Panc1 (cell line): ENCODE measurements at regions of chr7 and their contacts with region 1.

Region 1: GRCh38 chr7:70165477-70166170 is 567.3 kb downstream of the AUTS2 start:
- DNase-seq: no peak
- ATAC-seq: no peak
- H3K4me3 ChIP-seq: no peak overlapping the region
- H3K27ac ChIP-seq: no peak overlapping the region
- H3K4me1 ChIP-seq: no peaks in the 10 kb centered on the region
- H3K27me3 ChIP-seq: no peaks in the 10 kb centered on the region; the same call in 1 of the 2 replicates
- CTCF ChIP-seq: no peak

Region 2: DNA sequence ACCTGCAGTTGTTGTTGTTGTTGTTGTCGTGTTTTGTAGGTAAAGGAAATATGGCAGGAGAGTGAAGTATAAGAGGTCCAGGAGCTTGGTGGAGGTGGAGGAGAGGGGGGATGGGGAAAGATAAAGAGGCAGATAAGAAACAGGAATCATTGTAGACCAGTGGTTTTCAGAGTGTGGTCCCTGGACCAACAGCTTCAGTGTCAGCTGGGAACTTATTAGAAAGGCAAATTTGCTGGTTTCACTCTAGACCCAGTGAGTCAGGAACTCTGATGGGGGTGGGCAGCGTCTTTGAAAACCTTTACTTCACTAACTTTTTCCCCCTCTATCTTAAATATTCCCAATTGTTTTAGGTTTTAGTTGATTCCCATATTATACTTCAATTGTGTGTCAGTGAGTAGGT is 325.8 kb before region 1 on chr7:
- CTCF ChIA-PET with region 1: no interaction called
- POLR2A ChIA-PET with region 1: no interaction called
- in situ Hi-C with region 1: no loop called
- intact Hi-C with region 1: no loop called
- DNase-seq: no peak
- ATAC-seq: no peak
- H3K4me3 ChIP-seq: no peak overlapping the region
- H3K27ac ChIP-seq: no peak overlapping the region
- H3K4me1 ChIP-seq: no peaks in the 10 kb centered on the region
- H3K27me3 ChIP-seq: no peaks in the 10 kb centered on the region; the same call in 1 of the 2 replicates
- CTCF ChIP-seq: no peak

Region 3: DNA sequence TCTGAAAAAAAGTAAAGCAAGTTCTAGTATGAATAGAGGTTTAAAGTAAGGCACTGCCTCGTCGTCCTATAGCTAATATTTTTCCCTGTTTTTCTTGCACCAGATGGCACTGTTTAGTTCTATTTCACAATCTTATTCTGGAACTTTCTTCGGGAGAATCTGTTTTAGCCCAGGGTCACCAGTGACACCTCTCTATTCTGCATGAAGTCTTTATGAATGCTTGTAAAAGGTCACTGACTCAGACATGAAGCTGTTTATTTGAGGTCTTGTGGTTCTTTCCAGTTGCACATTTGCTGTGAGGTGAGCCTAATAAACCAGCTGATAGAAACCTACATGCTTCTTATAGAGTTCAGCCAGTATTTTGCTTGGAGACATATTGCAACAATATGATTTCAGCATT is 123.1 kb before region 1 on chr7:
- CTCF ChIA-PET with region 1: interaction called, 10 read pairs
- POLR2A ChIA-PET with region 1: interaction called, 6 read pairs
- in situ Hi-C with region 1: no loop called
- intact Hi-C with region 1: no loop called
- DNase-seq: no peak
- ATAC-seq: no peak
- H3K4me3 ChIP-seq: no peak overlapping the region
- H3K27ac ChIP-seq: no peak overlapping the region
- H3K4me1 ChIP-seq: no peaks in the 10 kb centered on the region
- H3K27me3 ChIP-seq: no peaks in the 10 kb centered on the region
- CTCF ChIP-seq: peak; percentile 22; the same call in 1 of the 2 replicates

Region 4: GRCh38 chr7:70183278-70183677 is 17.7 kb after region 1 on chr7:
- CTCF ChIA-PET with region 1: no interaction called
- POLR2A ChIA-PET with region 1: no interaction called
- in situ Hi-C with region 1: no loop called
- intact Hi-C with region 1: no loop called
- DNase-seq: no peak
- ATAC-seq: no peak
- H3K4me3 ChIP-seq: no peak overlapping the region
- H3K27ac ChIP-seq: no peak overlapping the region
- H3K4me1 ChIP-seq: no peaks in the 10 kb centered on the region
- H3K27me3 ChIP-seq: no peaks in the 10 kb centered on the region
- CTCF ChIP-seq: no peak